Panc1 (cell line): ENCODE measurements at regions of chr17 and their contacts with region 1.

Region 1: GRCh38 chr17:30278032-30278431 is 13.7 kb downstream of the BLMH start:
- DNase-seq: no peak
- ATAC-seq: no peak
- H3K4me3 ChIP-seq: no peak overlapping the region
- H3K27ac ChIP-seq: no peak overlapping the region
- H3K4me1 ChIP-seq: no peaks in the 10 kb centered on the region
- H3K27me3 ChIP-seq: no peaks in the 10 kb centered on the region
- CTCF ChIP-seq: peak; percentile 31; the same call in 1 of the 2 replicates

Region 2: DNA sequence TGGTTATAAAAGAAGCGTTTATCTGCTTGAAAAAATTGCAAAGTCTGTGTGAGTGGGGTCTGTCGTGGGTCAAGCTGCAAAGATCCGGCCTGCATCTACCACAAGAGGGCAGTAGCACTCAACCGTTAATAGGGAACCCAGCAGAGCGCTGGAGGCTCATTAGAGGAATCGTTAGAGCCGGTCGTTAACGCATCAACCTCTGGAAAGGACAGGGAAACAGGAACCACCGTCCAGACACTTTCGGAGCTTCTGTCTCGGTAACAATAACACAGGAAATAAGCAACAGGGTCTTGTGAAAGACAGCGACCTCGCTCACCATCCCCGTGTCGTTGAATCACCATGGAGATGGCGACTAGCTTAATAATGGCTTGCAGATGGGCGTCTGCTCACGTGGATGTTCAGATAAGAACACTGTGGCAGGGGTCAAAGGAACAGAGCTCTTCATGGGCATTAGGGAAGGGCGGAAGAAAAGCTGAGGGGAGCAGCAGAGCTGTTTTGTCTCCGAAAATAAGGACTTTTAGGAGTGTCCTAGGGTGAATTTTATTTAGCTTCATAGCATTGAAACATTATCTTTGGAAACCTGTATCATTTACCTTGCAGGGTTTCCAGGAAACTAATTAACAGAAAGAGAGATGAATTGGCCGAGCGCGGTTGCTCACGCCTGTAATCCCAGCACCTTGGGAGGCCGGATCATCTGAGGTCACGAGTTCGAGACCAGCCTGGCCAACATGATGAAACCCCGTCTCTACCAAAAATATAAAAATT is 173.3 kb before region 1 on chr17:
- CTCF ChIA-PET with region 1: interaction called, 10 read pairs
- POLR2A ChIA-PET with region 1: no interaction called
- in situ Hi-C with region 1: no loop called
- intact Hi-C with region 1: loop called (anchors 2 kb)
- DNase-seq: peak; percentile 73
- ATAC-seq: peak; percentile 98
- H3K4me3 ChIP-seq: peak overlapping the region; percentile 46 to 77
- H3K27ac ChIP-seq: peak overlapping the region; percentile 79
- H3K4me1 ChIP-seq: 0 out of 2 replicates have a peak, but pooled peaks cover 3% of the 10 kb centered on the region
- H3K27me3 ChIP-seq: no peaks in the 10 kb centered on the region
- CTCF ChIP-seq: peak; percentile 92

Region 3: GRCh38 chr17:30226878-30227277 is 51.2 kb before region 1 on chr17:
- CTCF ChIA-PET with region 1: no interaction called
- POLR2A ChIA-PET with region 1: no interaction called
- in situ Hi-C with region 1: no loop called
- intact Hi-C with region 1: no loop called
- DNase-seq: no peak
- ATAC-seq: no peak
- H3K4me3 ChIP-seq: no peak overlapping the region
- H3K27ac ChIP-seq: no peak overlapping the region
- H3K4me1 ChIP-seq: no peaks in the 10 kb centered on the region
- H3K27me3 ChIP-seq: peaks cover 2% of the 10 kb centered on the region; the same call in 1 of the 2 replicates
- CTCF ChIP-seq: no peak

Region 4: DNA sequence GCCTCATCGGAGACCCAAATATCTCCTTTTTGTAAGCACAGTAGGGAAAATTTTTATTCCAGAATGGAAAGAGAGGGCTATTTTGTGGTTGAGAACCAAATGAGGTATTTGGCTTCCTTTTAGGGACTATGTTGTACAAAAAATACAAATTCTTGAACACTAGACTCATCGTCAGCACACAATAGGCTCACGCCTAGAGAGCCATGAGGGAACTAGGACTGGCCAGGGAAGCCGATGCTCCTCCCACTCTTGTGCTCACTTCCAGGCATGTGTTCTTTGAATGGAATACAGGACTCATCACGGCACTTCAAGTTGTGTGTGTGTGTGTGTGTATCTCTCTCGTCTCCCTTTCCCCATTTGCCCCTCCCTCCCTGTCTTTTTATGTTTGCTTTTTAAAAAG is 31.6 kb after region 1 on chr17:
- CTCF ChIA-PET with region 1: no interaction called
- POLR2A ChIA-PET with region 1: no interaction called
- in situ Hi-C with region 1: no loop called
- intact Hi-C with region 1: no loop called
- DNase-seq: no peak
- ATAC-seq: no peak
- H3K4me3 ChIP-seq: no peak overlapping the region
- H3K27ac ChIP-seq: no peak overlapping the region
- H3K4me1 ChIP-seq: no peaks in the 10 kb centered on the region
- H3K27me3 ChIP-seq: no peaks in the 10 kb centered on the region; the same call in 1 of the 2 replicates
- CTCF ChIP-seq: no peak